ENCODE measurements at regions of chr13 and their contacts with region 1.

Region 1: DNA sequence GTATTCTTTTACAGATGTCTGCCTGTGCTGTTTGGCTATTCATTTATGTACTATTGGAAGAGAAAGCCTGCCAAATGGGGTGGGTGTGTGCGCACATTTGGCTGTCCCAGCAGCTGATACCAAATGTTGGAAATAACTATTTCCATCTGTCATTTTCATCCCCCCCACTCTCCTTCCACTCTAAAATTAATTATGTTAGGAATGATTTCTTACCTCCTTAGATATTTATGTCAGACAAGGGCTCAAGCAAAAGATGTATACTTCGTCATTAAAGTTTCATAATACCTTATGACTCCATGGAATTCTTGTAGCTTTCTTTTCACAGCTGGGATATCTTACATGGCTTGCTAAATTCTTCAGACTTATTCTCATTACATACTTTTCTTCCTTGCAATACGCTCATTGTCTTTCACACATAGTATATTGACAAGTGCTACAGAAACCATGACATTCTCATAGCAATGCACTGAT is 18.6 kb downstream of the ITM2B start:
- DNase-seq: no peak
- ATAC-seq: no peak
- H3K4me3 ChIP-seq: no peak overlapping the region
- H3K4me3 Mint-ChIP-seq: no peak overlapping the region
- H3K27ac ChIP-seq: no peak overlapping the region
- H3K27ac Mint-ChIP-seq: no peak overlapping the region
- H3K4me1 ChIP-seq: peaks cover 6 to 15% of the 10 kb centered on the region in 2 experiments
- H3K4me1 Mint-ChIP-seq: peaks cover 66 to 81% (median 77%) of the 10 kb centered on the region in 3 donors
- H3K27me3 ChIP-seq: no peaks in the 10 kb centered on the region
- H3K27me3 Mint-ChIP-seq: no peaks in the 10 kb centered on the region

Region 2: GRCh38 chr13:47991859-47992258 is 259.8 kb before region 1 on chr13:
- CTCF ChIA-PET with region 1: interaction called in 1 of 2 experiments, 13 read pairs
- POLR2A ChIA-PET with region 1: no interaction called
- DNase-seq: no peak
- ATAC-seq: no peak
- H3K4me3 ChIP-seq: no peak overlapping the region
- H3K4me3 Mint-ChIP-seq: no peak overlapping the region
- H3K27ac ChIP-seq: no peak overlapping the region
- H3K27ac Mint-ChIP-seq: no peak overlapping the region
- H3K4me1 ChIP-seq: no peaks in the 10 kb centered on the region
- H3K4me1 Mint-ChIP-seq: peaks cover 7 to 20% (median 9%) of the 10 kb centered on the region in 3 donors
- H3K27me3 ChIP-seq: no peaks in the 10 kb centered on the region
- H3K27me3 Mint-ChIP-seq: no peaks in the 10 kb centered on the region

Measured in T-cell (primary cell).